ENCODE measurements at regions of chr3 and their contacts with region 1.

Region 1: GRCh38 chr3:87503900-87504508 is 227.6 kb upstream of the POU1F1 start:
- DNase-seq: no peak
- H3K4me3 Mint-ChIP-seq: no peak overlapping the region
- H3K27ac Mint-ChIP-seq: no peak overlapping the region
- H3K4me1 Mint-ChIP-seq: no peaks in the 10 kb centered on the region
- H3K27me3 Mint-ChIP-seq: no peaks in the 10 kb centered on the region

Region 2: GRCh38 chr3:87260270-87260669 is 243.7 kb before region 1 on chr3:
- intact Hi-C with region 1: loop called (anchors 1 kb)
- DNase-seq: no peak
- H3K4me3 Mint-ChIP-seq: no peak overlapping the region
- H3K27ac Mint-ChIP-seq: no peak overlapping the region
- H3K4me1 Mint-ChIP-seq: peaks cover 7% of the 10 kb centered on the region
- H3K27me3 Mint-ChIP-seq: peaks cover 8% of the 10 kb centered on the region

Region 3: GRCh38 chr3:87350364-87351199 is 153.4 kb before region 1 on chr3:
- intact Hi-C with region 1: loop called (anchors 1 kb)
- DNase-seq: no peak
- H3K4me3 Mint-ChIP-seq: no peak overlapping the region
- H3K27ac Mint-ChIP-seq: no peak overlapping the region
- H3K4me1 Mint-ChIP-seq: no peaks in the 10 kb centered on the region
- H3K27me3 Mint-ChIP-seq: peaks cover 9% of the 10 kb centered on the region

Region 4: DNA sequence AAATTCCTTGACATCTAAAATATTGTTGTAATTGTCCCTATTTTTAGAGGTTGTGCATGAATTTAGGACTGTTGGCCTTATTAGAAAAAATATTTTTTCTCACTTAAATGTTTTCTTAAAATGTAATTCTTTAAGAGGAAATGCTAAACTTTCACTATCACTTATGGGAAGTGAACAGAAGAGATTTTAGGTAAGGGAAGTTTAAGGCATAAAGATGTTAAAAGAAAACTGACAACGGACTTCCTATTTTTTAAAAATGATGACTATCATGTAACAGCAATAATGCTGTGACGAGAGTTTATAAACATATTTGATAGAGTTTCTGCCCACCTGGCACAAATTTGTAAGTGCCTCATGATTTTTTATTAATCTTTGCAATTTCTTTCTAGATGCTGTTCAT is 648.8 kb after region 1 on chr3:
- intact Hi-C with region 1: no loop called
- DNase-seq: no peak
- H3K4me3 Mint-ChIP-seq: peak overlapping the region; percentile 56
- H3K27ac Mint-ChIP-seq: no peak overlapping the region
- H3K4me1 Mint-ChIP-seq: peaks cover 48% of the 10 kb centered on the region
- H3K27me3 Mint-ChIP-seq: no peaks in the 10 kb centered on the region